ENCODE measurements at regions of chr16 and their contacts with region 1.

Region 1: DNA sequence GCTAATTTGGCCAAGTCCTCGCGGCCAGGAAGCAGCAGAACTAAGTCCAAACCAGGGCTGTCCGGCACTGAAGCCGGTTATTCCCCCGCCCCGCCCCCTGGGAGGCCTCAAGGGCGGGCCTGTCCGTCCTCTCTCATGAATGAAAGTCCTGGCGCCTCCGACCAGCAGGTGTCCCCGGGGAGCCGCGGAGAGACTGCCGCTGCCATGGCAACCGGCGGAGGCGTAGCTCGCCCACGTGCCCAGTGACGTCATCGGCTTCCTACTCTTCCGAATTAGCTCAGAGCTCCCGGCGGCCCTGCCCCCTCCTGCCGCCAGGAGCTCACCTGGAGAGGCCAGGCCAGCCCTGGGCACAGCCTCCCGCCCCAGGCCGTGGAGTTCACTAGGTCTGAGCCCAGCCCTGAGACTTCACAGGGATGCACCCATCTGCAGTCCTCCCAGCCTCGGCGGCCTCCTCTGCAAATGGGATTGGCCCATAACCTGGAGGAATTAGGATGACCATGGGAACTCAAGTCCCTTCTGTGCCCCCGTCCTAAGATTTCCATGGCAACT is 1.3 kb downstream of the SPATA2L start:
- DNase-seq: peak; percentile 96 to 100
- H3K4me3 ChIP-seq: peak overlapping the region; percentile 67
- H3K27ac ChIP-seq: peak overlapping the region; percentile 29; the same call in 1 of the 2 replicates
- H3K4me1 ChIP-seq: peaks cover 5% of the 10 kb centered on the region; the same call in 1 of the 2 replicates
- H3K27me3 ChIP-seq: no peaks in the 10 kb centered on the region
- CTCF ChIP-seq: peak; percentile 79

Region 2: GRCh38 chr16:89241187-89242007 is 458.8 kb before region 1 on chr16:
- CTCF ChIA-PET with region 1: no interaction called
- POLR2A ChIA-PET with region 1: no interaction called
- intact Hi-C with region 1: loop called (anchors 10 kb)
- DNase-seq: peak; percentile 64 to 74
- H3K4me3 ChIP-seq: peak overlapping the region; percentile 99
- H3K27ac ChIP-seq: peak overlapping the region; percentile 80
- H3K4me1 ChIP-seq: no peaks in the 10 kb centered on the region
- H3K27me3 ChIP-seq: no peaks in the 10 kb centered on the region
- CTCF ChIP-seq: no peak

Region 3: DNA sequence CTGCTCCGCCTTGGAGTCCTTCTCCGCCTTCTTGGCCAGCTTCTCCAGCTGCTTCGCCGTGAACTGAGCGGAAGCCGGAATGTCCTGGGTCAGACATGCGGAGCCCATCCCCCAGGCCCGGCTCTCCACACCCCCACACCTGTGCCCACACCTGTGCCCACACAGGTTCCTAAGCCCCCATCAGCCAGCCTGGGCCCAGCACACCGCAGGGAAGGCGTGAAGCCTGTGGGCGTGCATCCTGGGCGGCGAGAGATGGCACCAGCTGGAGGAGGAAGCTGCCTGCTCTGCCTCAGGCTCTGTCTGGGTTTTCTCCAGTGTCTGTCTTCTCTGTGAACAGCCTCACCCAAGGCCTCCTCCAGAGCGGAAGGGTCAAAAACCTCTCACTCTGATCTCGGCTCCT is 48.6 kb before region 1 on chr16:
- CTCF ChIA-PET with region 1: interaction called, 19 read pairs
- POLR2A ChIA-PET with region 1: no interaction called
- intact Hi-C with region 1: no loop called
- DNase-seq: no peak
- H3K4me3 ChIP-seq: no peak overlapping the region
- H3K27ac ChIP-seq: no peak overlapping the region
- H3K4me1 ChIP-seq: peaks cover 8% of the 10 kb centered on the region
- H3K27me3 ChIP-seq: no peaks in the 10 kb centered on the region
- CTCF ChIP-seq: no peak

Region 4: DNA sequence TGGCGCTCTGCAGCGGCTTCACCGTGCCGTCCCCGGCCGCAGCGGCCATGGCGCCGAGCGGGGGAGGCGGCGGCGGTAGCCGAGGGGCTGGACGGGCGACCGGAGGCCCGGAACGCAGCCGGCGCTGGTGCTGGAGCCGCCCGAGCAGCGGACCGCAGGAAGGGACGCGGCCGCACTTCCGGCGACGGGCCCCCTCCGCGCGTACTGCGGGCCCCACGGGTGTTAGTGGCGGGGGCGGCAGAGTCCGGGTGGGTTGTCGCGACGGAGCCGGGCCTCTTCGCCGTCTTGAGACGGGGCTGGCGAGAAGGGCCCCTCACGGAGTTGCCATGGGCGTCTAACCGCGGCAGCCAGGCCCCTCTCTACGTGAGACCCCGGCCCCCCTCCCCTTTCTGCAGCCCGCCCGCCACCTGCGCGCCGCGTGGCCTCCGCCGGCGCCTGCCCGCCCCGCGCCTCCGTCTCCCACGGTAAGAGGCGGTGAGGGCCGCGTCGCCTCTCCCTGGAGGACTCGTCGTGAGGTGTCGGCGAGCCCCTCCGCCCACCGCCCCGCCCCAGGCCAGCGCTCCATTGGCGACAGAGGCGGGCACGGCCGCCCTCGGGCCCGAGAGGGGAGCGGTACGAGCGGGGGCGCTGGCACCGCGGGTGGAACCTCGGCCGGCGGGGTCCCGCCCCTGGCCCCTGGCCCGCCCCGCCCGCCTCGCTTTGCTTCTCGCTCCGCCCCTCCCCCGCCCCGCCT is 20.8 kb after region 1 on chr16 and contains the starts of genes VPS9D1 and ZNF276:
- CTCF ChIA-PET with region 1: interaction called, 3 read pairs
- POLR2A ChIA-PET with region 1: interaction called, 8 read pairs
- intact Hi-C with region 1: loop called (anchors 1 kb)
- DNase-seq: peak; percentile 66 to 91
- H3K4me3 ChIP-seq: peak within 1 kb of the TSS; percentile 93
- H3K27ac ChIP-seq: peak within 1 kb of the TSS; percentile 91
- H3K4me1 ChIP-seq: peaks cover 29% of the 10 kb centered on the region
- H3K27me3 ChIP-seq: no peaks in the 10 kb centered on the region
- CTCF ChIP-seq: no peak
- total RNA-seq, gene VPS9D1: 15.2 and 20.4 TPM in 2 replicates
- total RNA-seq, gene ZNF276: 28.8 and 32.0 TPM in 2 replicates

Region 5: DNA sequence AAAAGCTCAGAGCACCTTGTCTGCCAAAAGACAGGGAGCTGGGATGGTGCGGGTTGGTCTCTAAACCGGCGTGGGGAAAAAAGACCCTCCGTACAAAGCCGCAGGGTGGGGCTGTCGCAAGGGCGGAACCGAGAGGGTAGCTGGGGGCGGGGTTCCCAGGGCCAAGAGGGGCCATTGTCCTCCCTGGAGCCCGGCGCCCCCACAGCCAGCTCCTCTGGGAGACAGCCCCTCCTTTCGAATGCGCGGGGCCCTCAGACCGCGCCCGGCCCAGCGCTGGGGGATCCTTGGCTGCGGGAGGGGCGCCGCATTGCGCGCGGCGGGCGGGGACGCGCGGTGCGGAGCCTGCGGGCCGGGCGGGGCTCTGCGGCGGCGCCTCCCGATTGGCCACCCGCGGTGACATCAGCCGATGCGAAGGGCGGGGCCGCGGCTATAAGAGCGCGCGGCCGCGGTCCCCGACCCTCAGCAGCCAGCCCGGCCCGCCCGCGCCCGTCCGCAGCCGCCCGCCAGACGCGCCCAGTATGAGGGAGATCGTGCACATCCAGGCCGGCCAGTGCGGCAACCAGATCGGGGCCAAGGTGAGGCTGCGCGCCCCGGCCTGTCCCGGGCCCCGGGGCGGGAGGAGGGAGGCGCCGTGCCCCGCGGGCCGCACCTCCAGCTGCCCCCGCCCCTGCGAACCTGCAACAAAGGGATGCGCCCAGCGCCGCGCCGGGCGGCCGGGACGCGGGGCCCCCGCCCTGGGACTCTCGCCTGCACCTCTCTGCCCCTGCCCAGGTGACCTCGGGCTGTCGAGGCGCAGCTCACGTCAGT is 222.9 kb after region 1 on chr16 and contains the start of gene TUBB3:
- CTCF ChIA-PET with region 1: no interaction called
- POLR2A ChIA-PET with region 1: no interaction called
- intact Hi-C with region 1: loop called (anchors 5 kb)
- DNase-seq: peak in 1 of 2 experiments; percentile 89
- H3K4me3 ChIP-seq: peak within 1 kb of the TSS; percentile 72
- H3K27ac ChIP-seq: peak within 1 kb of the TSS; percentile 84
- H3K4me1 ChIP-seq: peaks cover 38% of the 10 kb centered on the region
- H3K27me3 ChIP-seq: no peaks in the 10 kb centered on the region
- CTCF ChIP-seq: no peak
- total RNA-seq, gene TUBB3: 79.6 and 105 TPM in 2 replicates